GM12878 (cell line): ENCODE measurements at regions of chr2 and their contacts with region 1.

Region 1: DNA sequence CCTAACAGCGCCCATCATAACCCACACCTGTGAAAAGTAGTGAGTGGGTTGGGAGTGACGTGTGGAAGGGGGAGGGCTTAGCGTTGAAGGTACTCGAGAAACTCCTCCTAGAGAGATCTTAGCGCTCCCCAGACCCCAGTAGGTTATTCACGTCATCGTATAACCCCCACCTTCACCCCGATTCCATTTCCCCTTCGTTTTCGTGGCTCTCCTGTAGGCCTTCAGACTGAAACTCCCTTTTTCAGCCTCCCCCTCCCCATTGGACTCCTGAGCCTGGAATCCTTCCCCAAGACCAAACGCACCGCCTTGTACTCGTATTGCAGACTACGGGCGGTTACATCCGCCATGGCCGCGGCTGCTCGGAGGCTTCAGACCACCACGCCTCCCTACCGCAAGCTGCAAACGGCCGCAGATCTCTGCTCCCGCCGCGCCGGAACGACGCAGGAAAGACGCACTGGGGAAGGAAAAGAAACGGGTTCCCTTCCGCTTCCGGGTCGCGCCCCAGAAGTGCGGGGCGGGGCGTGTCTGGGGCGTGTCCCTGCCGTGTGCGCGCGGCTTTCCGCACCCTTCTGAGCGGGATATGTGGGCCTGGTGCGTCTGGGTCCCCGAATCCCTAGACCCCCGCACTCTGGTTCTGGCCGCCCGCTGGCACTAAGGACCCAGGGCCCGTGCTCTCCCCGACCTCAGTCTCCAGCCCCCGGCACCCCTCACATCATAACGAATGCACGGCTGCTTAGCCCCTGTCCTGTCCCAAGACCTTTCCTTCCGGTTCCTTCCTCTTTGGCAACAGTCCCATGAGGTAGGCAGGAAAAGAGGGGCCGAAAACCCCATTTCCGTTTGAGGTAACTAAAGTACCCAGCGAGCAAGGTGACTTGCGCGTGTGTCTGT is at the start of gene SNRNP200:
- DNase-seq: no peak
- ATAC-seq: peak; percentile 98
- H3K4me3 ChIP-seq: peak within 1 kb of the TSS; percentile 90
- H3K27ac ChIP-seq: peak within 1 kb of the TSS; percentile 84
- H3K4me1 ChIP-seq: peaks cover 5% of the 10 kb centered on the region
- H3K27me3 ChIP-seq: no peaks in the 10 kb centered on the region
- CTCF ChIP-seq: no peak
- EP300 ChIP-seq: 0 out of 4 replicates have a peak, but pooled peaks of 1 of the 2 experiments have one; percentile 33
- POLR2A ChIP-seq: peak; percentile 94
- RAD21 ChIP-seq: no peak
- polyA plus RNA-seq, gene SNRNP200: 61.6 to 64.6 TPM

Region 2: DNA sequence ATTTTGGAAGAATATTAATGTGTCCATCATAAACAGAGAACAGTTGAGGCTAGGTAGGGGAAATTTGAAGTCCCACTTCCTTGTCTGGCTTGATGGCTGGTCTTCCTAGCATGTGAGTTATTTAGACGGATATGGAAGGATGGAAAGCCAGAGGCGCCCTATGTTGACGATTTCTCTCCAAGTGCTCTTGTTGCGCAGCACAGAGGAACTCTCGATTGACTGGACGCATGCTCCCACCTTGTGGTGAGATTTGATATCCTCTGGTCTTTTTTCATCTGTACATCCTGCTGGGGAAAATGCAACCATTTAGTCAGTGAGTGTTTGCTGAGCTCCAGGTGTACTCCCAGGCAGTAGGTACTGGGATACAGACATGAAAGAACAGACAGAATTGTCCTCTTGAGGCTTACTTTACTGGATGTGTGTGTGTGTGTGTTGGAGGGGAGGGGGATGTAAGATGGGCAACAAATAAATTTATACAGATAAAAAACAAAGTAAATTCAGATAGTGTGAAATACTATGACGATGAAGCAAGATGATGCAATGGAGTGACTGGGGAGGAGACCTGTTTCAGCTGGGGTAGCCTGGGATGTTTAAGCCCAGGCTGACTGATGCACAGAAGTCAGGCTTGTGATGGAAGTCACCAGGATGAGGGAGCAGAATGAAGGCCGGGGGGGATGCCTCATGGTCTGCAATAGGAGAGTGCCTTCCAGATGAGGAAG is 576.3 kb before region 1 on chr2:
- CTCF ChIA-PET with region 1: no interaction called
- POLR2A ChIA-PET with region 1: no interaction called
- RAD21 ChIA-PET with region 1: no interaction called
- SMC1A ChIA-PET with region 1: no interaction called
- in situ Hi-C with region 1: no loop called
- intact Hi-C with region 1: no loop called
- DNase-seq: peak; percentile 17
- ATAC-seq: peak; percentile 86
- H3K4me3 ChIP-seq: no peak overlapping the region
- H3K27ac ChIP-seq: no peak overlapping the region
- H3K4me1 ChIP-seq: no peaks in the 10 kb centered on the region
- H3K27me3 ChIP-seq: no peaks in the 10 kb centered on the region
- CTCF ChIP-seq: peak; percentile 43 to 51 (median 50); a peak in 5 of 6 replicates
- EP300 ChIP-seq: no peak
- POLR2A ChIP-seq: no peak
- RAD21 ChIP-seq: peak; percentile 74

Region 3: GRCh38 chr2:96315400-96316071 is 10.2 kb after region 1 on chr2:
- CTCF ChIA-PET with region 1: interaction called, 5 read pairs
- POLR2A ChIA-PET with region 1: interaction called, 24 read pairs
- RAD21 ChIA-PET with region 1: interaction called, 30 read pairs
- SMC1A ChIA-PET with region 1: interaction called, 29 read pairs
- in situ Hi-C with region 1: no loop called
- intact Hi-C with region 1: loop called (anchors 2 kb)
- DNase-seq: no peak
- ATAC-seq: peak; percentile 69
- H3K4me3 ChIP-seq: 0 out of 2 replicates have a peak overlapping the region, but pooled peaks have one; percentile 42
- H3K27ac ChIP-seq: peak overlapping the region; percentile 69
- H3K4me1 ChIP-seq: peaks cover 16% of the 10 kb centered on the region
- H3K27me3 ChIP-seq: no peaks in the 10 kb centered on the region
- CTCF ChIP-seq: no peak
- EP300 ChIP-seq: no peak
- POLR2A ChIP-seq: no peak
- RAD21 ChIP-seq: no peak

Region 4: GRCh38 chr2:96320728-96321622 is 15.6 kb after region 1 on chr2:
- CTCF ChIA-PET with region 1: interaction called, 5 read pairs
- POLR2A ChIA-PET with region 1: interaction called, 24 read pairs
- RAD21 ChIA-PET with region 1: interaction called, 30 read pairs
- SMC1A ChIA-PET with region 1: interaction called, 29 read pairs
- in situ Hi-C with region 1: no loop called
- intact Hi-C with region 1: loop called (anchors 2 kb)
- DNase-seq: no peak
- ATAC-seq: peak; percentile 48
- H3K4me3 ChIP-seq: peak overlapping the region; percentile 90
- H3K27ac ChIP-seq: peak overlapping the region; percentile 88
- H3K4me1 ChIP-seq: peaks cover 30% of the 10 kb centered on the region
- H3K27me3 ChIP-seq: no peaks in the 10 kb centered on the region
- CTCF ChIP-seq: no peak
- EP300 ChIP-seq: no peak
- POLR2A ChIP-seq: no peak; the same call in 1 of the 2 replicates
- RAD21 ChIP-seq: no peak

Region 5: GRCh38 chr2:96344011-96344410 is 38.7 kb after region 1 on chr2:
- CTCF ChIA-PET with region 1: interaction called, 6 read pairs
- POLR2A ChIA-PET with region 1: interaction called, 12 read pairs
- RAD21 ChIA-PET with region 1: interaction called, 7 read pairs
- SMC1A ChIA-PET with region 1: interaction called, 20 read pairs
- in situ Hi-C with region 1: no loop called
- intact Hi-C with region 1: loop called (anchors 2 kb)
- DNase-seq: peak; percentile 91
- ATAC-seq: peak; percentile 93
- H3K4me3 ChIP-seq: no peak overlapping the region
- H3K27ac ChIP-seq: peak overlapping the region; percentile 65
- H3K4me1 ChIP-seq: peaks cover 55% of the 10 kb centered on the region
- H3K27me3 ChIP-seq: no peaks in the 10 kb centered on the region
- CTCF ChIP-seq: no peak
- EP300 ChIP-seq: peak; percentile 54 to 69; a peak in 3 of 4 replicates
- POLR2A ChIP-seq: no peak
- RAD21 ChIP-seq: no peak

Region 6: DNA sequence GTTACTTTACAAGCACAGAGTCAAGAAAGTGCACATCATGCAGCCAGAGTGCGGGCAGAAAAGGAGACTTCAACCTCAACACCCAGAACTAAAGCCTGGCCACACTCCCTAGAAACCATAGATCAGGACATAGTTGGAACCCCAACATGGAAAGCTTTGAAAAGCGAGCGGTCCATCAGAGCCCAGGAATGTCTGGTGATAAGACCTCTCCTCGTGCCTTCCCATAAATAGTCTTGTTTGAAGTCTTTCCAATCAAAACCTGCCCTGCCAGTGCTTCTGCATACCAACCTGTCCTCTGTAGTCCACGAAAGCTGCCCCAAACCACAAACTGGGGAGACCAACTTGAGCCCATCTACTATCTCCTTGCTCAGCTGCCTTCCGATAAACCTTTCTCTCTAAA is 144.3 kb after region 1 on chr2:
- CTCF ChIA-PET with region 1: no interaction called
- POLR2A ChIA-PET with region 1: no interaction called
- RAD21 ChIA-PET with region 1: no interaction called
- SMC1A ChIA-PET with region 1: no interaction called
- in situ Hi-C with region 1: no loop called
- intact Hi-C with region 1: no loop called
- DNase-seq: no peak
- ATAC-seq: no peak
- H3K4me3 ChIP-seq: no peak overlapping the region
- H3K27ac ChIP-seq: no peak overlapping the region
- H3K4me1 ChIP-seq: no peaks in the 10 kb centered on the region
- H3K27me3 ChIP-seq: no peaks in the 10 kb centered on the region
- CTCF ChIP-seq: no peak
- EP300 ChIP-seq: no peak
- POLR2A ChIP-seq: no peak
- RAD21 ChIP-seq: no peak